B cell (primary cell): ENCODE measurements at regions of chr19 and their contacts with region 1.

Region 1: DNA sequence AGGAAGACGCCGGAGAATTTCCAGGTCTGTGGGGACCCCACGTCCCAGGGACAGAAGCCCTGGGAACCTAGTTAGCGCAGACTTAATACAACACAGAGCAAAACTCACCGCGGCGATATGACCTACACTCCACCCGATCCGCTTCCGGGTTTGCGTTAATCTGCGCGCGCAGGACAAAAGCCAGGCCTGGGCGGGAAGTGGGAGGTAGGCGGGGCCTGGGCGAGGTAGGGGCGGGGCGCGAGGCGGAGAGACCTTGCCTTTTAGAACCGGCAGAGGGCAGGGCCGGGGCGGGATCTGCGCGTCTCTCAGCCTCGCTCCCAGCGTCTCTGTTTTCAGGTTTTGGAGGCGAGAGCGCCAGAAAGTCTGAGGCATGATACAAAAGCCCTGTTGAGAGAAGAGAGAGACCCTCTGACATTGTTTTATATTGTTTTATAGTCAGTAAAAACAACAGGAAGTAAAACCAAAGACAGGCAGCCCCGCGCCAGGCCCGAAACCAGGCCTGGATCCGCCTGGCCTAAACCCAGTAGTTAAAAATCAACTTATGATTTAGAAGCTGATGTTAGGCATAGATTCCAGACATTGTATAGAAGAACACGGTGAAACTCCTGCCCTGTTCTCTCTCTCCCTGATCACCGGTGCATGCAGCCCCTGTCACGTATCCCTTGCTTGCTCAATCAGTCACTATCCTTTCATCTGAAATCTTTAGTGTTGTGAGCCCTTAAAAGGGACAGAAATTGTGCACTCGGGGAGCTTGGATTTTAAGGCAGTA is at the start of gene ZNF611:
- DNase-seq: peak; percentile 98
- ATAC-seq: peak; percentile 98
- H3K4me3 ChIP-seq: peak within 1 kb of the TSS; percentile 67 to 96 (median 90)
- H3K4me3 Mint-ChIP-seq: peak within 1 kb of the TSS; percentile 93
- H3K27ac ChIP-seq: peak within 1 kb of the TSS; percentile 74 to 91
- H3K27ac Mint-ChIP-seq: peak within 1 kb of the TSS; percentile 92
- H3K4me1 ChIP-seq: peaks cover 10 to 19% of the 10 kb centered on the region in 2 donors
- H3K4me1 Mint-ChIP-seq: peaks cover 23% of the 10 kb centered on the region
- H3K27me3 ChIP-seq: no peaks in the 10 kb centered on the region
- H3K27me3 Mint-ChIP-seq: no peaks in the 10 kb centered on the region
- CTCF ChIP-seq: peak; percentile 79
- total RNA-seq, gene ZNF611: 51.5 and 57.9 TPM in 2 replicates

Region 2: DNA sequence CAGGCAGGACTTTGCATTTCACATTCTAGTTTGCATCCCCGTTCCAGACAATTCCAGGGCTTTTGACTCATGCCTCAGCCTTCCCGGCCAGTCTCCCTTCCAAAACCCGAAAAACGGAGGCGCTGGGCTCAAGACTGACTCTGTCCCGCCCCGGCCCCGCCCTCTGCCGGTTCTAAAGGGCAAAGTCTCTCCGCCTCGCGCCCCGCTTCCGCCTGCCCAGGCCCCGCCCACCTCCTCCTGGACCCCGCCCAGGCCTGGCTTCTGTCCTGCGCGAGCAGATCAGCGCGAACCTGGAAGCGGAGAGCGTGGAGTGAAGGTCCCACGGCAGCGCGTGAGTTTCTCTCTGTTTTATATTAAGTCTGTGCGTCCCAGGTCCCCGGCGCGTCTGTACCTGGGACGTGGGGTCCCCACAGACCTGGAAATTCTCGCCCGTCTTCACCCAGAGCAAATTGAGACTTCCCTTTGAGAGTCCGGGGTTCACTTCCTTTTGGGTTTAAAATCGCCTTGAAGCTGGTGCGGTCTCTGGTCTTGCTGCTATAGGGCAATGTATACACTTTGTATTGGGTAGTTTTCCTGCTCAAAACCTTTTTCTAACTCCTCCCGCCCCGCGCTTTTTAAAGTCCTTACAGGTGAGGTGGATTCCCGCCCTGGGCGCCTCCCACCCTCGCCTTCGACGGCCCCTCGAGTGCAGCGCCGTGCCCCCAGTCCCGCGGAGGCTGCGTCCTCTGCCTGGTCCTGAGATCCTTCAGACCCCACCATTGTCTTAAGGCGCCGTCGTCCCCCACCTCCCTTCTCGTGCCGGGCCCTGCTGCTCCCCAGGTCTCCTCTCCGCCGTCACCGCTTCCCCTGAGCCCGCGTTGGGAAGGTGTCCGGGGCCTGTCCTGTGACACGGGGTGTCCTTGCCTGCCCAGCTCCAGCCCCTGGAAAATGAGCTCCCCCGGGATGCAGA is 133.8 kb before region 1 on chr19:
- CTCF ChIA-PET with region 1: no interaction called
- POLR2A ChIA-PET with region 1: no interaction called
- intact Hi-C with region 1: loop called (anchors 1 kb)
- DNase-seq: peak; percentile 92
- ATAC-seq: peak; percentile 99
- H3K4me3 ChIP-seq: peak overlapping the region; percentile 59 to 89 (median 82)
- H3K4me3 Mint-ChIP-seq: peak overlapping the region; percentile 90
- H3K27ac ChIP-seq: peak overlapping the region; percentile 43 to 62
- H3K27ac Mint-ChIP-seq: peak overlapping the region; percentile 87
- H3K4me1 ChIP-seq: peaks cover 11 to 16% of the 10 kb centered on the region in 2 donors
- H3K4me1 Mint-ChIP-seq: peaks cover 25% of the 10 kb centered on the region
- H3K27me3 ChIP-seq: no peaks in the 10 kb centered on the region
- H3K27me3 Mint-ChIP-seq: no peaks in the 10 kb centered on the region
- CTCF ChIP-seq: peak; percentile 61

Region 3: DNA sequence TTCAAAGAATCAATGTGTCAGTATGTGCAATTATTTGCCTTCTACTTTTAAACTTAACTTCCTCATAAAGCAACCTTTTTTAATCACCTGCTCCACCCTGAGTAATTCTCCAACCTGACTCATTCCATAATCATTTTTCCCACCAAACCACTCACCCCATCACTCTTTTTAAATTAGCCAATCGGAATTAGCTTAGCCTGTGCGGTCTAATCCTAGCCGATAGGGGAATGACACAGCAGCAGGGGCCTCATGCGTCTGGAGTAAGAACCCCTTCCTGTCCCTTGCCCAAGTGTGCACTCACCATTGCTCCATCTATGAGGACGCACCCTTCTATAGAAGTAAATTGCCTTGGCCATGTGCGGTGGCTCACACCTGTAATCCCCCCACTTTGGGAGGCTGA is 69.5 kb before region 1 on chr19:
- CTCF ChIA-PET with region 1: no interaction called
- POLR2A ChIA-PET with region 1: no interaction called
- intact Hi-C with region 1: no loop called
- DNase-seq: no peak
- ATAC-seq: no peak
- H3K4me3 ChIP-seq: no peak overlapping the region
- H3K4me3 Mint-ChIP-seq: no peak overlapping the region
- H3K27ac ChIP-seq: no peak overlapping the region
- H3K27ac Mint-ChIP-seq: no peak overlapping the region
- H3K4me1 ChIP-seq: no peaks in the 10 kb centered on the region
- H3K4me1 Mint-ChIP-seq: no peaks in the 10 kb centered on the region
- H3K27me3 ChIP-seq: no peaks in the 10 kb centered on the region
- H3K27me3 Mint-ChIP-seq: no peaks in the 10 kb centered on the region
- CTCF ChIP-seq: no peak

Region 4: GRCh38 chr19:52690369-52691214 is 44.5 kb before region 1 on chr19:
- CTCF ChIA-PET with region 1: no interaction called
- POLR2A ChIA-PET with region 1: no interaction called
- intact Hi-C with region 1: loop called (anchors 1 kb)
- DNase-seq: peak; percentile 92
- ATAC-seq: peak; percentile 97
- H3K4me3 ChIP-seq: peak overlapping the region; percentile 76 to 91 (median 80)
- H3K4me3 Mint-ChIP-seq: peak overlapping the region; percentile 97
- H3K27ac ChIP-seq: peak overlapping the region; percentile 55 to 72
- H3K27ac Mint-ChIP-seq: peak overlapping the region; percentile 87
- H3K4me1 ChIP-seq: peaks cover 12 to 15% of the 10 kb centered on the region in 2 donors
- H3K4me1 Mint-ChIP-seq: peaks cover 26% of the 10 kb centered on the region
- H3K27me3 ChIP-seq: no peaks in the 10 kb centered on the region
- H3K27me3 Mint-ChIP-seq: no peaks in the 10 kb centered on the region
- CTCF ChIP-seq: no peak